ENCODE measurements at regions of chr6 and their contacts with region 1.

Region 1: GRCh38 chr6:18488526-18489270 is 101.5 kb downstream of the RNF144B start:
- DNase-seq: no peak
- H3K4me3 Mint-ChIP-seq: no peak overlapping the region
- H3K27ac Mint-ChIP-seq: no peak overlapping the region
- H3K4me1 Mint-ChIP-seq: peaks cover 16% of the 10 kb centered on the region
- H3K27me3 Mint-ChIP-seq: peaks cover 37% of the 10 kb centered on the region

Region 2: GRCh38 chr6:18323935-18324705 is 164.6 kb before region 1 on chr6:
- intact Hi-C with region 1: loop called (anchors 5 kb)
- DNase-seq: no peak
- H3K4me3 Mint-ChIP-seq: no peak overlapping the region
- H3K27ac Mint-ChIP-seq: no peak overlapping the region
- H3K4me1 Mint-ChIP-seq: peaks cover 11% of the 10 kb centered on the region
- H3K27me3 Mint-ChIP-seq: peaks cover 6% of the 10 kb centered on the region

Region 3: GRCh38 chr6:18387061-18387721 is 101.5 kb before region 1 on chr6 and contains the start of gene RNF144B:
- intact Hi-C with region 1: loop called (anchors 5 kb)
- DNase-seq: peak; percentile 43
- H3K4me3 Mint-ChIP-seq: peak within 1 kb of the TSS; percentile 84
- H3K27ac Mint-ChIP-seq: peak within 1 kb of the TSS; percentile 1
- H3K4me1 Mint-ChIP-seq: peaks cover 27% of the 10 kb centered on the region
- H3K27me3 Mint-ChIP-seq: peaks cover 12% of the 10 kb centered on the region
- total RNA-seq, gene RNF144B: 4.0 and 5.7 TPM in 2 replicates

Region 4: GRCh38 chr6:18503593-18504231 is 15.0 kb after region 1 on chr6:
- intact Hi-C with region 1: loop called (anchors 2 kb)
- DNase-seq: no peak
- H3K4me3 Mint-ChIP-seq: no peak overlapping the region
- H3K27ac Mint-ChIP-seq: no peak overlapping the region
- H3K4me1 Mint-ChIP-seq: peaks cover 6% of the 10 kb centered on the region
- H3K27me3 Mint-ChIP-seq: peaks cover 33% of the 10 kb centered on the region

Region 5: DNA sequence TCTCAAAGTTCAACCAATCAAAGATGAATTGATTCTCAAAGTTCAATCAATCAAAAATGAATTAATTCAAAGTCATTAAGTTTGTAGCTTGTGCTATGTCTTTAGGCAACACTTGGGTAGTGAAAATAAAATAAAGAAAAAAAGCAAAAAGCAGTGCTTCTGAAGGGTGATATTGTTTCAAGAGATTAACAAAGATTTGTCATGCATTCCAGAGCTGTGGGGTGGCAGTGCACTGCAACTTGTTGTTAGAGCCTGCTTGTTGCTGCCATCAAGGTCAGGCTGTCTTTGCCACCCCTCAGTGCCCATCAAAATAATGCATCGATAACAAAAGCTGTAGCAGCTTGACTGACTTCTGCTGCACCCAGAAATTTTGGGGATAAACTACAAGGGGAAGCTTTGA is 27.1 kb after region 1 on chr6:
- intact Hi-C with region 1: loop called (anchors 1 kb)
- DNase-seq: no peak
- H3K4me3 Mint-ChIP-seq: no peak overlapping the region
- H3K27ac Mint-ChIP-seq: no peak overlapping the region
- H3K4me1 Mint-ChIP-seq: peaks cover 18% of the 10 kb centered on the region
- H3K27me3 Mint-ChIP-seq: peaks cover 23% of the 10 kb centered on the region

Measured in activated T-helper 2 cell treated with anti-CD3 and anti-CD28 coated beads, Interferon-gamma antibody, Interleukin-2, Interleukin-4, amounts not matched to agents 10 μg/mL and 5 μg/mL and 100 μg/mL, durations not matched to agents 14 hours and 24 hours and 36 hours (primary cell).